Upper lobe of right lung (tissue), 1 donor: ENCODE measurements at regions of chr1 and their contacts with region 1.

Region 1: GRCh38 chr1:167066333-167067122 is 23.6 kb downstream of the GPA33 start:
- DNase-seq: peak; percentile 88
- ATAC-seq: peak; percentile 98
- H3K4me3 ChIP-seq: no peak overlapping the region
- H3K27ac ChIP-seq: no peak overlapping the region
- H3K4me1 ChIP-seq: no peaks in the 10 kb centered on the region
- H3K27me3 ChIP-seq: no peaks in the 10 kb centered on the region
- CTCF ChIP-seq: peak; percentile 96

Region 2: DNA sequence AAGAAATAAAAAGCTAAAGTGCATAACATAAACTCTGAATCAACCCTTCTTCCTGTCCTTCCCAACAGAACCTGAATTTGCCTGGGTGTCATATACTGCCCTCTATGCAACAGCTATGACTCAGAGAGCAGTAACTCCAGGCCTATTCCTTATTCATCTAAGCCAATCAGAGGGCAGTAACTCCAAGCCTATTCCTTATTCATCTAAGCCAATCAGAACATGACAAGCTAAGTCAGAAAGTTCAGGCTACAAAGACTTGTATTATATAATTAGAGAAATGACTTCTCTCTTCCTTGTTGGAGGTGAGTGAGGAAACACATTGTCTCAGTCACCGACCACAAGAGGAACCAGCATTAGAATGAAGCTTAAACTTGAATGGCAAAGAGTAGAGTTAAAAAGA is 164.3 kb before region 1 on chr1:
- intact Hi-C with region 1: loop called (anchors 10 kb)
- DNase-seq: no peak
- ATAC-seq: peak; percentile 90
- H3K4me3 ChIP-seq: no peak overlapping the region
- H3K27ac ChIP-seq: no peak overlapping the region
- H3K4me1 ChIP-seq: no peaks in the 10 kb centered on the region
- H3K27me3 ChIP-seq: no peaks in the 10 kb centered on the region
- CTCF ChIP-seq: no peak

Region 3: GRCh38 chr1:167207940-167208623 is 141.6 kb after region 1 on chr1:
- intact Hi-C with region 1: no loop called
- DNase-seq: no peak
- ATAC-seq: no peak
- H3K4me3 ChIP-seq: no peak overlapping the region
- H3K27ac ChIP-seq: no peak overlapping the region
- H3K4me1 ChIP-seq: no peaks in the 10 kb centered on the region
- H3K27me3 ChIP-seq: no peaks in the 10 kb centered on the region
- CTCF ChIP-seq: peak; percentile 16

Region 4: DNA sequence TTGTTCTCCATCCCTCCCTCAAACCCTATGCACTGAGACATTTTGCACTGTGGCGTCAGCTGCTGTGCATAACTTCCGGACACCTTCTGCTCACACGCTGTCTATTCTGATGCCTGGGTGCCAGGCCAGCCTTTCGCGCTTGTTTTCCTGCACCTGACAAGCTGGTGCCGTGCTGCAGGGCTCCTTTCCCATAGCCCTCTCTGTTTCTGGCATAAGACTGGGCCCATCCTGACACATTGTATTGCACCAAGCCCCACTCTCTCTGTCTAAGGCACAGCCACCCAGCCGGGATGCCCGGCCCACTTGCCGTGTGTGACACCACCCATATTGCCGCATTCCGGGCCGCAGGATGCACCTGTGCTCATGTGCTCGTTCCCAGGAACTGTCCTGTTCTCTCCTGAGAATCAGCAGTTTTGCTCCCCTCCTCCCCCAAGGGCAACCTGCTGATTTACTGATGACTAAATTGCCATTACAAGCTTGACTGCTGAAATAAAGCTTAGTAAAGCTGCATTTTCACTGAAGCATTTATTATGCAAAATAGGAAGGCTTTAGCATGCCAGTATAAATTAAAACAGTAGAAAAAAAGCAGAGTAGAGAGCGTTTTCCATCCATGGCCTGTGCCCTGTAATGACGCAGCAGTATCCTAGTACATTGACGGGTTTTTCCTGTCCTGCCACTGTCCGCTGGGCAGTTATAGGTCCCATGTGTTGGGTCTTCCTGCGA is 363.8 kb after region 1 on chr1:
- intact Hi-C with region 1: no loop called
- DNase-seq: no peak
- ATAC-seq: no peak
- H3K4me3 ChIP-seq: no peak overlapping the region
- H3K27ac ChIP-seq: no peak overlapping the region
- H3K4me1 ChIP-seq: no peaks in the 10 kb centered on the region
- H3K27me3 ChIP-seq: no peaks in the 10 kb centered on the region
- CTCF ChIP-seq: no peak

Region 5: GRCh38 chr1:167442124-167442848 is 375.8 kb after region 1 on chr1:
- intact Hi-C with region 1: loop called (anchors 10 kb)
- DNase-seq: peak; percentile 93
- ATAC-seq: peak; percentile 96
- H3K4me3 ChIP-seq: no peak overlapping the region
- H3K27ac ChIP-seq: no peak overlapping the region
- H3K4me1 ChIP-seq: peaks cover 16% of the 10 kb centered on the region
- H3K27me3 ChIP-seq: peaks cover 8% of the 10 kb centered on the region
- CTCF ChIP-seq: peak; percentile 92